PC-9 (cell line): ENCODE measurements at regions of chr5 and their contacts with region 1.

Region 1: GRCh38 chr5:86617756-86618576 is at the start of gene COX7C:
- DNase-seq: peak; percentile 86 to 90
- H3K4me3 ChIP-seq: peak within 1 kb of the TSS; percentile 88
- H3K27ac ChIP-seq: peak within 1 kb of the TSS; percentile 72
- H3K4me1 ChIP-seq: peaks cover 12% of the 10 kb centered on the region
- H3K27me3 ChIP-seq: no peaks in the 10 kb centered on the region
- CTCF ChIP-seq: no peak
- total RNA-seq, gene COX7C: 376 and 489 TPM in 2 replicates

Region 2: GRCh38 chr5:86461169-86461956 is 156.6 kb before region 1 on chr5:
- CTCF ChIA-PET with region 1: no interaction called
- POLR2A ChIA-PET with region 1: interaction called, 10 read pairs
- intact Hi-C with region 1: no loop called
- DNase-seq: peak; percentile 44 to 76
- H3K4me3 ChIP-seq: no peak overlapping the region
- H3K27ac ChIP-seq: no peak overlapping the region
- H3K4me1 ChIP-seq: peaks cover 18% of the 10 kb centered on the region
- H3K27me3 ChIP-seq: no peaks in the 10 kb centered on the region
- CTCF ChIP-seq: no peak

Region 3: GRCh38 chr5:86542532-86542931 is 75.4 kb before region 1 on chr5:
- CTCF ChIA-PET with region 1: no interaction called
- POLR2A ChIA-PET with region 1: no interaction called
- intact Hi-C with region 1: no loop called
- DNase-seq: no peak
- H3K4me3 ChIP-seq: no peak overlapping the region
- H3K27ac ChIP-seq: no peak overlapping the region
- H3K4me1 ChIP-seq: no peaks in the 10 kb centered on the region
- H3K27me3 ChIP-seq: no peaks in the 10 kb centered on the region
- CTCF ChIP-seq: no peak

Region 4: DNA sequence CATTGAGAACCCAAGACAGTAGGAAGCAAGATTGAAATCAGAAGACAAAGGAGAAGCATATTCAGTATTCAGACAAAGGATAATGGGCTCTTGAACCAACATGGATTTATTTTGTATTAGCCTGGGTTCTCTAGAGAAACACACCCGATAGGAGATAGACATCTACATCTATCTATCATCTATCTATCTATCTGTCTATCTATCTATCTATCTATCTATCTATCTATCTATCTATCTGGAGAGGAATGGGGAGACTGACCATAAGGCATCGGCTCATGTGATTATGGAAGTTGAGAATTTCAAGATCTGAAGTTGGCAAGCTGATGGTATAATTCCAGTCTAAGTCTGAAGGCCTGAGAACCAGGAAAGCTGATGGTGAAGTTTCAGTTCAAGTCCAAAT is 13.2 kb after region 1 on chr5:
- CTCF ChIA-PET with region 1: no interaction called
- POLR2A ChIA-PET with region 1: no interaction called
- intact Hi-C with region 1: no loop called
- DNase-seq: no peak
- H3K4me3 ChIP-seq: no peak overlapping the region
- H3K27ac ChIP-seq: no peak overlapping the region
- H3K4me1 ChIP-seq: no peaks in the 10 kb centered on the region
- H3K27me3 ChIP-seq: no peaks in the 10 kb centered on the region
- CTCF ChIP-seq: no peak